ENCODE measurements at regions of chr6 and their contacts with region 1.

Region 1: GRCh38 chr6:16332175-16332542 is 93.8 kb downstream of the GMPR start:
- DNase-seq: peak; percentile 83
- H3K4me3 Mint-ChIP-seq: no peak overlapping the region
- H3K27ac Mint-ChIP-seq: no peak overlapping the region
- H3K4me1 Mint-ChIP-seq: no peaks in the 10 kb centered on the region
- H3K27me3 Mint-ChIP-seq: no peaks in the 10 kb centered on the region

Region 2: DNA sequence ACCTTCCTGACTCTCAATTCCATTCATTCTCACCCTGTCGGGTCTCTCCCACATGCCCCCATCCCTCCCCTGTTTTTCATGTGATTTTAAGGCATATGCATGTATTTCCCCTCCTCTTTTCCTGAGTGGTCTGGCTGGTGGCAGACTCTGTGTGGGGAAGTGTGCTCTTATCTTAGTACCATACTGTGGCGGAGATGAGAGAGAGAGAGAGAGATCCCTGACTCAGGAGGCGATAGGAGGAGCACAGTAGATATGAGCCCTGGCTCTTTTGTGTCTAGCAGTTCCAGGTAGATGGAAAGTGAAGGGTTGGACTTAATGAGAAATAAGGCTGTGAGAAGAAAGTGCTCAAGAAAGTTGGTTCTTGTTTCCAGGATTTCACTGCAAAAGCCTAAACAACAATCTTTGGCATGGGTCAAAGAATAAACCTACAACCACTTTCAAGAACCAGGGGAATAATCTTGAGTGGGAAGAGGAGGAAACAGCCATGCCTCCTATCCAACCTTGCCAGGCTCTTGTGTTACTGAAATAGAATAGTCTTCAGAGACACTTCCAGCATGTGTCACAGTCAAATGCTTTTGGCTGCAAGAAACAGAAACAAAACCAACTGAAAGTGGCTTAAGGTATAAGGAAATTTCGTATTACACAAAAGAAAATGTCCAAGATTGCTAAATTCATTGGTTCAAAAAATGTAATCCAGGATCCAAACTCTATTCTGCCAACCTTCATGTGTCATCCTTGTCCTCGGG is 327.1 kb before region 1 on chr6:
- CTCF ChIA-PET with region 1: no interaction called
- DNase-seq: no peak
- H3K4me3 Mint-ChIP-seq: no peak overlapping the region
- H3K27ac Mint-ChIP-seq: no peak overlapping the region
- H3K4me1 Mint-ChIP-seq: no peaks in the 10 kb centered on the region
- H3K27me3 Mint-ChIP-seq: peaks cover 4% of the 10 kb centered on the region

Region 3: DNA sequence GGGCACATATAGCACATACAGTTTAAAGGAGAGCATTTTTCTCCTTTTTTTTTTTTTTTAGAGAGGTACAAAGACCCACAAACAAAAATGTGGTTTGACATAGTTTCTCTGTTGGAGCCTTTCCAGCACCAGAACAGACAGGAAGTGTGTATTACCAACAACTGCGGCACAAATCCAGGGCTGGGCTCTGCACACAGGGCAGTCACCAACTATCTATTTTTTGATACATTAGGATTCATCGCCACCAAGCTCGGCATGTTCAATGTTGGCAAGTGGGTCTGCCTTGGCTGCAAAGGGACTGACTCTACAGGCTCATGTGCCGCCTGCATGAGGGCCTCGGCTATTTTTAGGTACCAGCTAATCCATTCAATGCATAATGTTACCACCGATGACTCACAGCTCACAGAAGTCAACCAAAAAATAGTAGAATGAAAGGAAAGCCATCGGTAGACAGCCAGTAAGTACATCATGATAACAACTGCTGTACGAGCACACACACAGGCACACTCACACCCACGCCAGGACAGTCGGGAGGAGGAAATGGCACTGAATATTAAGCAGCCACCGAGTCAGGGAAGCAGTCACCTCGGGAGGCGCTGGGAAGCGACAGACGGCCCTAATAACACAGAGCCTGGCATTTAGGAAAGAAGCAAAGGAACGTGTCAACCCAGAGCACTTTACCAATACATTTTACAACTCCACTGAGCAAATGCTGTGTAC is 12.2 kb before region 1 on chr6:
- CTCF ChIA-PET with region 1: interaction called, 24 read pairs
- DNase-seq: peak; percentile 76
- H3K4me3 Mint-ChIP-seq: peak overlapping the region; percentile 46
- H3K27ac Mint-ChIP-seq: peak overlapping the region; percentile 90
- H3K4me1 Mint-ChIP-seq: peaks cover 70% of the 10 kb centered on the region
- H3K27me3 Mint-ChIP-seq: no peaks in the 10 kb centered on the region

Region 4: DNA sequence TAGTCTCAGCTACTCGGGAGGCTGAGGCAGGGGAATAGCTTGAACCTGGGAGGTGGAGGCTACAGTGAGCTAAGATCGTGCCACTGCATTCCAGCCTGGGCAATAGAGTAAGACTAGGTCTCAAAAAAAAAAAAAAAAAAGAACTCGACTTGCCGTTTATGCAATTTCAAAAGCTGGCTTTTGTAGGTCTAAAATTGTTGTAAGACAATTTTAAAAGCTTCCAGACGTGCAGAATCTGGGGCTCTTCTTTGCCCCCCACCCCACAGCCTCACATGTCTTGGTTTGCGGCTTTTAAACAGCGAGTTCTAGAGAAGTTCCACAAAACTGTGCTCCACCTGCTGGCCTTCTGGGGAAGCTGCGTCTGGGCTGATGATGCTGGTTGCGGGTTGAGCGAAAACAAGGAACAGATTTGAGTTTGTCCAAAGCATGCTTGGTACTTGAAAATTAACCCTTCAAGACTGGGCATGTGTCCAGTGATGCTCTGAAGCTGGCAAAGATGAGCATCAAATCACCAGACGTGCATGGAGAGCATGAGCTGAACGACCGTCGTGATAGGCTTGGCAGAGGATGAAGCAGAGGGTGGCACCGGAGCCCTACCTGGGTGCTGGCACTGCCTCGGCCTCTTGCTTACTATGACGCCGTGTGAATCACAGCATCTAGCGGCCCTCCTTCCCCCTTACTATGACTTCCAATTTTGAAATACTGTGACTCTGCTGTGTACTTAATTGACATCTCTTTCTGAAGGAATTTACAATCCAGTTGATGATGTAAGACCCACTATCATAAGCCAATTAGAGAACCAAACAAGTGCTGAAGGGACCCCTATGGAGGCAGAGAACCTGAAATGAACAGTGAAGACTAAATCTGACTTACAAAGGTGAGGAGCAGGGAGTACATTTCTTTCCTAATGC is 77.6 kb after region 1 on chr6:
- CTCF ChIA-PET with region 1: interaction called, 14 read pairs
- DNase-seq: peak; percentile 70
- H3K4me3 Mint-ChIP-seq: no peak overlapping the region
- H3K27ac Mint-ChIP-seq: no peak overlapping the region
- H3K4me1 Mint-ChIP-seq: peaks cover 40% of the 10 kb centered on the region
- H3K27me3 Mint-ChIP-seq: no peaks in the 10 kb centered on the region

Region 5: GRCh38 chr6:16420715-16421461 is 88.7 kb after region 1 on chr6:
- CTCF ChIA-PET with region 1: interaction called, 10 read pairs
- DNase-seq: peak; percentile 56
- H3K4me3 Mint-ChIP-seq: peak overlapping the region; percentile 59
- H3K27ac Mint-ChIP-seq: peak overlapping the region; percentile 94
- H3K4me1 Mint-ChIP-seq: peaks cover 47% of the 10 kb centered on the region
- H3K27me3 Mint-ChIP-seq: no peaks in the 10 kb centered on the region

Region 6: DNA sequence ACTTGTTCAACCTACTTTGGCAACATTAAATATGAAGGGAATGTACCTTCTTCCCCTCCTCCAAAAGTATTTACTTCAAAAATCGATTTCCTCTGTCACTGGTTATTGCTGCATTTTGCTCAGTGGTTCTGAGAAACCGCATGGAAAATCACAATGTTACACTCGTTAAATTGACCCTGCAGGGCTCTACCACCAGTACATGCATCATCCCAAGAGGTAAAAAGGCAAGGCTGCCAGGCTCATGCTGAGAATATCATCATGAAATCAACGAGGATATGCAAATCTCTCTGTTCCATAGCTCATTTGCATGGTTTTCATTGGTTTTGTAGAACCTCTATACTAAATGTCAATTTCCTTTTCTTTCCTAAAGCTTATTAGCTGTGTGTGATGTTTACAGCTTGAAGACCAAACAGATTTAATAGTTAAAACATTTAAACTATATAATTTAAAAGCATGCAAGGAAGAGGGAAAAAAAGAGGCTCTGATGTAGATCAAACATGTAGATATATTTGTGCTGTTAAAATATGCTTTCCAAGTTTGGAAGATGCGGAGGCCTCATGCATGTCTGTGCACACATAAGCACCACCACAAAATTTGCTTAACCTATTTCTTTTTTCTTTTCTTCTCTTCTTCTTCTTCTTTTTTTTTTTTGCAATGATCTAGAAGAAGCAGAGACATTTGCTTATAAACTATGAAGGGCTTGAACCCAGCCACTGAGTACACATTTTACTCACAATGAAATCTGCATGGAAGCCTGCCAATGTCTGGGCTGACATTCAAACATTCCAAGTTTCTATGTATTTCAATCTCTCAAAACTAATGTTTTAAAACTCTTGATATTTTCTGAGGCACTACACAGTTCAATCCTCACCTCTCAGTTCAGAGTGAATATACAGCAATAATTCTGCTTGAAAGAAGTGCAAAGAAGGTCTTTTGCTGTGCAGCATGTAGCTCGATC is 100.2 kb after region 1 on chr6:
- CTCF ChIA-PET with region 1: no interaction called
- DNase-seq: no peak
- H3K4me3 Mint-ChIP-seq: no peak overlapping the region
- H3K27ac Mint-ChIP-seq: no peak overlapping the region
- H3K4me1 Mint-ChIP-seq: peaks cover 31% of the 10 kb centered on the region
- H3K27me3 Mint-ChIP-seq: no peaks in the 10 kb centered on the region

Region 7: GRCh38 chr6:16514249-16514648 is 182.1 kb after region 1 on chr6:
- CTCF ChIA-PET with region 1: interaction called, 17 read pairs
- DNase-seq: peak; percentile 45
- H3K4me3 Mint-ChIP-seq: no peak overlapping the region
- H3K27ac Mint-ChIP-seq: peak overlapping the region; percentile 54
- H3K4me1 Mint-ChIP-seq: peaks cover 69% of the 10 kb centered on the region
- H3K27me3 Mint-ChIP-seq: no peaks in the 10 kb centered on the region